T-cell (primary cell): ENCODE measurements at regions of chr5 and their contacts with region 1.

Region 1: GRCh38 chr5:177113566-177114424 is 19.8 kb upstream of the NSD1 start:
- DNase-seq: peak; percentile 26 to 90 (median 70)
- ATAC-seq: peak; percentile 47 to 57 (median 49)
- H3K4me3 ChIP-seq: no peak overlapping the region
- H3K4me3 Mint-ChIP-seq: no peak overlapping the region
- H3K27ac ChIP-seq: no peak overlapping the region
- H3K27ac Mint-ChIP-seq: peak overlapping the region in 1 of 2 donors; percentile 33
- H3K4me1 ChIP-seq: peaks cover 0 to 26% of the 10 kb centered on the region in 2 experiments
- H3K4me1 Mint-ChIP-seq: peaks cover 16 to 24% (median 16%) of the 10 kb centered on the region in 3 donors
- H3K27me3 ChIP-seq: no peaks in the 10 kb centered on the region
- H3K27me3 Mint-ChIP-seq: no peaks in the 10 kb centered on the region

Region 2: DNA sequence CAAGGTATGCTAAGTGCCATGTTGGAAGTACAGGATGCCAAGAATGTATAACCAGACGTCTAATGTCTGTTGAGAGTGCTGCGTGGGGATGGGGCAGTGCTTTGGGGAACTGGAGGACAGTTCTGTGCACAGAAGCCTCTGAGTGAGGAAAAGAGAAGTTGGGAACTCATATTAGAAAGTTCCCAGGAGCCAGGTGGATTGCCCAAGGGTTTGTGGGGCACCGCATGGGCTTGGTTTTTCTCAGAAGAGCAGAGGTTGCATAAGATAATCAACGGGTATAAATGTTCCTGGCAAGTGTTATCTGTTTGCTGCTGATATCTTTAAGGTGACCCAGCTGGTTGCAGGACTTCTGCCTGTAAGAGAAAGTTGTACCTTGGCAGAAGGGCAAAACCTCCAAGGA is 1442.8 kb before region 1 on chr5:
- CTCF ChIA-PET with region 1: no interaction called
- POLR2A ChIA-PET with region 1: no interaction called
- DNase-seq: peak in 1 of 35 experiments; percentile 19
- ATAC-seq: no peak
- H3K4me3 ChIP-seq: no peak overlapping the region
- H3K4me3 Mint-ChIP-seq: peak overlapping the region in 1 of 3 donors; percentile 25
- H3K27ac ChIP-seq: no peak overlapping the region
- H3K27ac Mint-ChIP-seq: peak overlapping the region; percentile 37 to 74
- H3K4me1 ChIP-seq: peaks cover 0 to 15% of the 10 kb centered on the region in 2 experiments
- H3K4me1 Mint-ChIP-seq: peaks cover 69 to 71% (median 71%) of the 10 kb centered on the region in 3 donors
- H3K27me3 ChIP-seq: no peaks in the 10 kb centered on the region
- H3K27me3 Mint-ChIP-seq: no peaks in the 10 kb centered on the region

Region 3: GRCh38 chr5:177264178-177264577 is 150.4 kb after region 1 on chr5:
- CTCF ChIA-PET with region 1: interaction called in 1 of 2 experiments, 12 read pairs
- POLR2A ChIA-PET with region 1: no interaction called
- DNase-seq: no peak
- ATAC-seq: no peak
- H3K4me3 ChIP-seq: no peak overlapping the region
- H3K4me3 Mint-ChIP-seq: no peak overlapping the region
- H3K27ac ChIP-seq: no peak overlapping the region
- H3K27ac Mint-ChIP-seq: no peak overlapping the region
- H3K4me1 ChIP-seq: no peaks in the 10 kb centered on the region
- H3K4me1 Mint-ChIP-seq: no peaks in the 10 kb centered on the region
- H3K27me3 ChIP-seq: no peaks in the 10 kb centered on the region
- H3K27me3 Mint-ChIP-seq: no peaks in the 10 kb centered on the region